Activated naive CD4-positive, alpha-beta T cell treated with anti-CD3 and anti-CD28 coated beads for 36 hours (primary cell): ENCODE measurements at regions of chr11 and their contacts with region 1.

Region 1: DNA sequence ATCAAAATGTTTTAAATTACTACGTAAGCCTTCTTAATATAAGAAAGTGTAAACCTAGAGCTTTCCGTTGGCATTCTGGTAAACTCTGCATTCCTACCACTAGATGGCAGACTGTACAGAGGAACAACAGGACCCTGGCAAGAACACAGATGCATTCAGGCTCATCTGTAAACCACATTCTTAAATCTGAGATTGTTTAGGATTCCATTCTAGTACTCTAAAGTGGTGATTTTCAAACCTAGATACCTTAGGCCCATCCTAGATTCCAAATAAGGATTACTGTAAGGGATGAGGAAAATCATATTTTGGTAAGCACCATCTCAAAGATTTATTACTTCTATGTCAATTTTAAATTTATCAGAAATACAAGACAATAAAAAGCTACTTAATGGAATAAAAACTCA is 26.9 kb downstream of the PICALM start:
- DNase-seq: peak; percentile 77
- H3K4me3 Mint-ChIP-seq: no peak overlapping the region
- H3K27ac Mint-ChIP-seq: peak overlapping the region; percentile 73
- H3K4me1 Mint-ChIP-seq: peaks cover 69% of the 10 kb centered on the region
- H3K27me3 Mint-ChIP-seq: no peaks in the 10 kb centered on the region

Region 2: GRCh38 chr11:86418917-86419316 is 376.9 kb after region 1 on chr11:
- CTCF ChIA-PET with region 1: no interaction called
- intact Hi-C with region 1: loop called (anchors 5 kb)
- DNase-seq: peak; percentile 18
- H3K4me3 Mint-ChIP-seq: no peak overlapping the region
- H3K27ac Mint-ChIP-seq: no peak overlapping the region
- H3K4me1 Mint-ChIP-seq: peaks cover 3% of the 10 kb centered on the region
- H3K27me3 Mint-ChIP-seq: no peaks in the 10 kb centered on the region